Calu3 (cell line): ENCODE measurements at regions of chr22 and their contacts with region 1.

Region 1: GRCh38 chr22:40877488-40877887 is 15.6 kb upstream of the DNAJB7 start:
- DNase-seq: no peak
- H3K4me3 Mint-ChIP-seq: no peak overlapping the region
- H3K27ac Mint-ChIP-seq: no peak overlapping the region
- H3K4me1 Mint-ChIP-seq: peaks cover 11% of the 10 kb centered on the region
- H3K27me3 Mint-ChIP-seq: no peaks in the 10 kb centered on the region
- CTCF ChIP-seq: no peak

Region 2: GRCh38 chr22:40856513-40857308 is 20.8 kb before region 1 on chr22 and contains the starts of genes ST13 and XPNPEP3:
- CTCF ChIA-PET with region 1: no interaction called
- intact Hi-C with region 1: no loop called
- DNase-seq: peak; percentile 97
- H3K4me3 Mint-ChIP-seq: peak within 1 kb of the TSS; percentile 99
- H3K27ac Mint-ChIP-seq: peak within 1 kb of the TSS; percentile 100
- H3K4me1 Mint-ChIP-seq: peaks cover 16% of the 10 kb centered on the region
- H3K27me3 Mint-ChIP-seq: no peaks in the 10 kb centered on the region
- CTCF ChIP-seq: no peak
- total RNA-seq, gene ST13: 307 and 322 TPM in 2 replicates
- total RNA-seq, gene XPNPEP3: 33.1 and 39.9 TPM in 2 replicates

Region 3: GRCh38 chr22:41106122-41106968 is 228.9 kb after region 1 on chr22:
- CTCF ChIA-PET with region 1: no interaction called
- intact Hi-C with region 1: loop called (anchors 5 kb)
- DNase-seq: no peak
- H3K4me3 Mint-ChIP-seq: no peak overlapping the region
- H3K27ac Mint-ChIP-seq: no peak overlapping the region
- H3K4me1 Mint-ChIP-seq: peaks cover 17% of the 10 kb centered on the region
- H3K27me3 Mint-ChIP-seq: no peaks in the 10 kb centered on the region
- CTCF ChIP-seq: no peak